Pancreas (tissue), 10 donors: ENCODE measurements at regions of chr4 and their contacts with region 1.

Region 1: GRCh38 chr4:56910172-56910967 is 2.7 kb downstream of the REST start:
- DNase-seq: no peak
- ATAC-seq: no peak
- H3K4me3 ChIP-seq: peak overlapping the region in 2 of 4 donors; percentile 96 to 100
- H3K27ac ChIP-seq: peak overlapping the region in 2 of 4 donors; percentile 12 to 91
- H3K4me1 ChIP-seq: peaks cover 7 to 20% (median 16%) of the 10 kb centered on the region in 3 donors
- H3K27me3 ChIP-seq: no peaks in the 10 kb centered on the region
- CTCF ChIP-seq: no peak

Region 2: DNA sequence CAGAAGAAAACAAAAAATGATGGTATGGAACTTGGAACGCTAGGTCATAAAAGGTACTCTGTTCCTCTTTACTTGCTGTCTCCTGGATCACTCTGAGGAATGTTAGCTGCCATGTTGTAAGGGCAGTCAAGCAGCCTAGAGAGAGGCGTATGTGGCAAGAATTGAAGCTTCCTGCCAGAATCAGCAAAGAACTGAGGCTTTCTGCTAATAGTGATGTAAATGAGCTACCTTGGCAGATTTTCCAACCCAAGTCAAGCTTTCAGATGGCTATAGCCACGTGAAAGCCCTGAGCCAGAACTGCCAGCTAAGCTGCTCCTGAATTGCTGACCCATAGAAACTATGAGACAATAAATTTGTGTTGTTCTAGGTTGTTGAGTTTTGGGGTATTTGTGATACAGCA is 561.8 kb before region 1 on chr4:
- intact Hi-C with region 1: no loop called
- DNase-seq: no peak
- ATAC-seq: no peak
- H3K4me3 ChIP-seq: no peak overlapping the region
- H3K27ac ChIP-seq: no peak overlapping the region
- H3K4me1 ChIP-seq: no peaks in the 10 kb centered on the region
- H3K27me3 ChIP-seq: no peaks in the 10 kb centered on the region
- CTCF ChIP-seq: no peak

Region 3: GRCh38 chr4:56961107-56961500 is 50.7 kb after region 1 on chr4:
- intact Hi-C with region 1: loop called in 1 of 3 experiments (anchors 10 kb)
- DNase-seq: no peak
- ATAC-seq: no peak
- H3K4me3 ChIP-seq: no peak overlapping the region
- H3K27ac ChIP-seq: no peak overlapping the region
- H3K4me1 ChIP-seq: peaks cover 0 to 3% (median 0%) of the 10 kb centered on the region in 3 donors
- H3K27me3 ChIP-seq: no peaks in the 10 kb centered on the region
- CTCF ChIP-seq: no peak

Region 4: DNA sequence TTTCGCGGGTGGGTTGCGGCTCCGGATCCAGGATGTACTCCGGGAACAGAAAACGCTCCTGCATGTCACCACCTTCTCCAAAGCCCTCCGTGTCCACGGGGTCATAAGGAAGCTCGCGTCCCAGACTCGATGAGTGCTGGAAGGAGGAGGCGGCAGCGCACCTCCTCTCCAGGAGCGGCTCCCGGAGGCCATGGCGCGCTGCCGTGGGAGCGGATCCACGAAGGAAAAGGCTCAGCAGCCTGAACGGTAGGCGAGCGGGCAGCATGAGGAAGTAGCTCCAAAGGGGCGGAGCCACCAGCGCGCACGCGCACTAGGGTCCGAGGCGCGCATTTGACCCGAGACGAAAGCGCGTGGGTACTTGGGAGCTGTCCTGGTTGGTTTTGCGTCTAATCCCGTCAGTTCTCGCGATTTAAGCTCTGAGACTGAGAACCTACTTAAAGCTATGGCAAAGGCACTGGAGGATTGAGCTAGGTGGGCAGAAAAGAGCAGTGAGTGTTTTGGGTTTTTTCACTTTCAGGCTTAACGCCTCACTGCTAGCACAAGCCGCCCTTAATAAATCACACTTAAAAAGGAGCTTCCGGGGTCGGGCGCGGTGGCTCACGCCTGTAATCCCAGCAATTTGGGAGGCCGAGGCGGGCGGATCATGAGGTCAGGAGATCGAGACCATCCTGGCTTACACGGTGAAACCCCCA is 67.1 kb after region 1 on chr4 and contains the start of gene NOA1:
- intact Hi-C with region 1: loop called in 1 of 3 experiments (anchors 10 kb)
- DNase-seq: peak; percentile 96 to 99 (median 98)
- ATAC-seq: peak; percentile 80 to 89 (median 86)
- H3K4me3 ChIP-seq: peak within 1 kb of the TSS; percentile 85 to 97 (median 91)
- H3K27ac ChIP-seq: peak within 1 kb of the TSS; percentile 76 to 90 (median 80)
- H3K4me1 ChIP-seq: peaks cover 22 to 41% (median 24%) of the 10 kb centered on the region in 3 donors
- H3K27me3 ChIP-seq: no peaks in the 10 kb centered on the region
- CTCF ChIP-seq: no peak
- total RNA-seq, gene NOA1: 12.6 to 27.0 (median 19.6) TPM